Activated CD4-positive, alpha-beta T cell treated with anti-CD3 and anti-CD28 coated beads for 36 hours (primary cell): ENCODE measurements at regions of chr20 and their contacts with region 1.

Region 1: GRCh38 chr20:45857114-45857881 is at the starts of genes ACOT8 and ZSWIM3:
- DNase-seq: peak; percentile 95
- ATAC-seq: peak; percentile 97
- H3K4me3 Mint-ChIP-seq: peak within 1 kb of the TSS; percentile 93
- H3K27ac Mint-ChIP-seq: peak within 1 kb of the TSS; percentile 99
- H3K4me1 Mint-ChIP-seq: peaks cover 38% of the 10 kb centered on the region
- H3K27me3 Mint-ChIP-seq: no peaks in the 10 kb centered on the region
- total RNA-seq, gene ACOT8: 21.9 to 22.6 TPM
- total RNA-seq, gene ZSWIM3: 4.2 to 4.8 TPM

Region 2: GRCh38 chr20:45735552-45735951 is 121.7 kb before region 1 on chr20:
- CTCF ChIA-PET with region 1: no interaction called
- POLR2A ChIA-PET with region 1: no interaction called
- intact Hi-C with region 1: no loop called
- DNase-seq: no peak
- ATAC-seq: no peak
- H3K4me3 Mint-ChIP-seq: no peak overlapping the region
- H3K27ac Mint-ChIP-seq: no peak overlapping the region
- H3K4me1 Mint-ChIP-seq: no peaks in the 10 kb centered on the region
- H3K27me3 Mint-ChIP-seq: peaks cover 29% of the 10 kb centered on the region

Region 3: DNA sequence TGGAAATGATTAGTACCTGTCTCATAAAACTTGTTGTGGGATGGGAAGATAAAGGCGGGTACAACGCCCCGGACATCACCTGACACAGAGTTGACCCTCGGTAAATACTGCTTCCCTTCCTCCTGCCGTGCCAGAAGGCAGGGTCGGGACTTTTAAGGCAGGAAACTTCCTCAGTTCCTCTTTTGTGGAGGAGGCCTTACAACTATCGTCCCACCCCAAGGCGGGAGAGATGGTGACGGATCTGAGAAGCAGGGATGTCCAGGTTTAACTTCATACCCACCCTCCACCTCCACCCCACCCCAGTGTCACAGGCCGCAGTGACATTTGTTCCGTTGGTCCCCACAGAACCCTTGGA is 65.0 kb before region 1 on chr20:
- CTCF ChIA-PET with region 1: no interaction called
- POLR2A ChIA-PET with region 1: interaction called, 3 read pairs
- intact Hi-C with region 1: loop called in 1 of 2 experiments (anchors 2 kb)
- DNase-seq: peak; percentile 12
- ATAC-seq: peak; percentile 2
- H3K4me3 Mint-ChIP-seq: peak overlapping the region; percentile 81
- H3K27ac Mint-ChIP-seq: peak overlapping the region; percentile 80
- H3K4me1 Mint-ChIP-seq: peaks cover 13% of the 10 kb centered on the region
- H3K27me3 Mint-ChIP-seq: no peaks in the 10 kb centered on the region

Region 4: DNA sequence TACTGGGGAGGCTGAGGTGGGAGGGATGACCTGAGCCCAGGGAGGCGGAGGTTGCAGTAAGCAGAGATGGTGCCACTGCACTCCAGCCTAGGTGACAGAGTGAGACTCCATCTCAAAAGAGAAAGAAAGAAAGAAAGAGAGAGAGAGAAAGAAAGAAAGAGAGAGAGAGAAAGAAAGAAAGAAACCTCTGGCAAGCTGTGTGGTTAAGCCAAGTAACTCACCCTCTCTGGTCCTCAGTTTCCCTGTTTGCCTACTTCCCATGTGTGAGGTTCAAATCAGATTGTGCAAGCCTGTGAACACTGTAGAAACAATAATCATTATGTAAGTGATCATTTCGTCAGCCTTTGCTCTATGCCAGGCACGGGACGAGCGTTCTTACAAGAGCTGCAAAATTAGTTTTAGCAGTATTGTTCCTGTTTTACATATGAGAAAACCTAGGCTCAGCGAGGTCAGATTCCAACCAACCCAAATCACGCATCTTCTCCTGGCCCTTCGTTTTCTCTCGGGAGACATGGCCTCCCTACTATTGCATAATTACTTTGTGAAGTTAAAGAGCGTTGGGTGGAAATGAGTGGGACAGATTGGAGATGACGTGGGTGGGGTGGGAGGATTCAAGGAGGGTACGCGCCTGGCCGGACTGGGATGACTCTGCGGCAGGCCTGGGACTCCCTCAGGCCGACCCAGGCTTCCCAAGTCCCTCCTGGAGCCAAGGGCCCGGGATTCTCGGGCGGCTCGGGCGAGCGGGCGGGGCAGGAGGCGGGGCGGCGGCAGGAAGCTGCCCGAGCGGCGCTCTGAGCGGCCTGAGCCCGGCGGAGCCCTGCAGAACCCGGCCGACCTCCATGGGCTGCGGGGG is 24.0 kb before region 1 on chr20 and contains the start of gene SNX21:
- CTCF ChIA-PET with region 1: no interaction called
- POLR2A ChIA-PET with region 1: no interaction called
- intact Hi-C with region 1: loop called in 1 of 2 experiments (anchors 1 kb)
- DNase-seq: peak; percentile 59
- ATAC-seq: peak; percentile 60
- H3K4me3 Mint-ChIP-seq: peak within 1 kb of the TSS; percentile 69
- H3K27ac Mint-ChIP-seq: peak within 1 kb of the TSS; percentile 31
- H3K4me1 Mint-ChIP-seq: peaks cover 9% of the 10 kb centered on the region
- H3K27me3 Mint-ChIP-seq: peaks cover 3% of the 10 kb centered on the region
- total RNA-seq, gene SNX21: 1.2 to 1.4 TPM

Region 5: GRCh38 chr20:45880988-45881788 is 23.9 kb after region 1 on chr20 and contains the start of gene ZSWIM1:
- CTCF ChIA-PET with region 1: interaction called, 6 read pairs
- POLR2A ChIA-PET with region 1: interaction called, 3 read pairs
- intact Hi-C with region 1: loop called (anchors 1 kb)
- DNase-seq: peak; percentile 99
- ATAC-seq: peak; percentile 98
- H3K4me3 Mint-ChIP-seq: peak within 1 kb of the TSS; percentile 94
- H3K27ac Mint-ChIP-seq: peak within 1 kb of the TSS; percentile 95
- H3K4me1 Mint-ChIP-seq: peaks cover 42% of the 10 kb centered on the region
- H3K27me3 Mint-ChIP-seq: no peaks in the 10 kb centered on the region
- total RNA-seq, gene ZSWIM1: 9.4 to 10.7 TPM

Region 6: GRCh38 chr20:45890985-45891983 is 34.0 kb after region 1 on chr20 and contains the starts of genes CTSA and NEURL2:
- CTCF ChIA-PET with region 1: interaction called, 6 read pairs
- POLR2A ChIA-PET with region 1: interaction called, 4 read pairs
- intact Hi-C with region 1: loop called (anchors 1 kb)
- DNase-seq: peak; percentile 94
- ATAC-seq: peak; percentile 80
- H3K4me3 Mint-ChIP-seq: peak within 1 kb of the TSS; percentile 89
- H3K27ac Mint-ChIP-seq: peak within 1 kb of the TSS; percentile 87
- H3K4me1 Mint-ChIP-seq: peaks cover 32% of the 10 kb centered on the region
- H3K27me3 Mint-ChIP-seq: no peaks in the 10 kb centered on the region
- total RNA-seq, gene CTSA: 36.4 to 45.6 TPM
- total RNA-seq, gene NEURL2: 1.2 to 1.9 TPM

Region 7: GRCh38 chr20:45910670-45911485 is 53.6 kb after region 1 on chr20:
- CTCF ChIA-PET with region 1: interaction called, 3 read pairs
- POLR2A ChIA-PET with region 1: no interaction called
- intact Hi-C with region 1: loop called (anchors 1 kb)
- DNase-seq: peak; percentile 98
- ATAC-seq: peak; percentile 92
- H3K4me3 Mint-ChIP-seq: peak overlapping the region; percentile 68
- H3K27ac Mint-ChIP-seq: peak overlapping the region; percentile 80
- H3K4me1 Mint-ChIP-seq: peaks cover 16% of the 10 kb centered on the region
- H3K27me3 Mint-ChIP-seq: peaks cover 12% of the 10 kb centered on the region